ENCODE measurements at regions of chr4 and their contacts with region 1.

Region 1: DNA sequence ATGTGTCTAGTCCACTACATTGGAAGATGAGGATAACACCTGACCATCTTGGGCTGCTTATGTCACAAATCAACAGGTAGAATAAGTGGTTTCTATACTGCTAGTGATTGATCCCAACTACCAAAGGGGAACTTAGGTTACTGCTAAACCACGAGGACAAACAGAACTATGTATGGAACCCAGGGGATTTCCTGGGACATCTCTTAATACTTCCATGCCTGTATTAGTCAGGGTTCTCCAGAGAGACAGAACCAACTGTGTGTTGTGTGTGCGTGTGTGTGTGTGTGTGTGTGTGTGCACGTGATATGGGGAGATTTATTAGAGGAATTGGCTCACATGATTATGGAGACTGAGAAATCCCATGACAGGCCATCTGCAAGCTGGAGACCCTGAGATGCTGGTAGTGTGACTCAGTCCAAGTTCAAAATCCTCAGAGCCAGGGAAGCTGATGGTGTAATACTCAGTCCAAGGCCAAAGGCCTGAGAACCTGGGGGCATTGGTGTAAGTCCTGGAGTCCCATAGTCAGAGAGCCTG is 16.2 kb upstream of the AFF1 start:
- DNase-seq: no peak
- ATAC-seq: no peak
- H3K4me3 ChIP-seq: no peak overlapping the region
- H3K4me3 Mint-ChIP-seq: no peak overlapping the region
- H3K27ac ChIP-seq: no peak overlapping the region
- H3K27ac Mint-ChIP-seq: no peak overlapping the region
- H3K4me1 ChIP-seq: peaks cover 0 to 2% of the 10 kb centered on the region in 2 donors
- H3K4me1 Mint-ChIP-seq: no peaks in the 10 kb centered on the region
- H3K27me3 ChIP-seq: no peaks in the 10 kb centered on the region
- H3K27me3 Mint-ChIP-seq: no peaks in the 10 kb centered on the region
- CTCF ChIP-seq: no peak

Region 2: GRCh38 chr4:86657910-86658309 is 260.7 kb before region 1 on chr4:
- CTCF ChIA-PET with region 1: no interaction called
- POLR2A ChIA-PET with region 1: no interaction called
- intact Hi-C with region 1: no loop called
- DNase-seq: no peak
- ATAC-seq: no peak
- H3K4me3 ChIP-seq: no peak overlapping the region
- H3K4me3 Mint-ChIP-seq: no peak overlapping the region
- H3K27ac ChIP-seq: no peak overlapping the region
- H3K27ac Mint-ChIP-seq: no peak overlapping the region
- H3K4me1 ChIP-seq: no peaks in the 10 kb centered on the region
- H3K4me1 Mint-ChIP-seq: no peaks in the 10 kb centered on the region
- H3K27me3 ChIP-seq: no peaks in the 10 kb centered on the region
- H3K27me3 Mint-ChIP-seq: no peaks in the 10 kb centered on the region
- CTCF ChIP-seq: no peak

Region 3: DNA sequence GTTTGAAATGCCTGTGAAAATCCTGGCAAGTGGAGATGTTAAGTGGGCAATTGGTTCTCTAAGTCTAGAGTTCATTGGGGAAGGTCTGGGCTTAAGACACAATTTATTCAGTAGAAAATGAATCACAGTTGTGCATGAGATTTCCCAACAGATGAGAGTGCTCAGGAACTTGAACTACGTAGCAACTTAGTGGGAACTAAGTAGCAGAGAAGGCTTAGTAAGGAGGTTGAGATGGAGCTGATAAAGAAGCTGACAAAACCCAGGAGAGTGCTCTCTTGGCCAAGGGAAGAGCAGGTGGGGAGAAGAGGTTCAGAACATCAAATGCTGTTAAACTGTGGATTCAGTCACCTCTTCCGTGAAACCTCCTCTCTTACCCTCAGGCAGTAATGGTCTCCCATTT is 49.2 kb after region 1 on chr4:
- CTCF ChIA-PET with region 1: interaction called, 11 read pairs
- POLR2A ChIA-PET with region 1: interaction called, 4 read pairs
- intact Hi-C with region 1: no loop called
- DNase-seq: no peak
- ATAC-seq: no peak
- H3K4me3 ChIP-seq: no peak overlapping the region
- H3K4me3 Mint-ChIP-seq: no peak overlapping the region
- H3K27ac ChIP-seq: no peak overlapping the region
- H3K27ac Mint-ChIP-seq: no peak overlapping the region
- H3K4me1 ChIP-seq: peaks cover 40% of the 10 kb centered on the region in 2 donors
- H3K4me1 Mint-ChIP-seq: peaks cover 7% of the 10 kb centered on the region
- H3K27me3 ChIP-seq: no peaks in the 10 kb centered on the region
- H3K27me3 Mint-ChIP-seq: no peaks in the 10 kb centered on the region
- CTCF ChIP-seq: no peak

Region 4: DNA sequence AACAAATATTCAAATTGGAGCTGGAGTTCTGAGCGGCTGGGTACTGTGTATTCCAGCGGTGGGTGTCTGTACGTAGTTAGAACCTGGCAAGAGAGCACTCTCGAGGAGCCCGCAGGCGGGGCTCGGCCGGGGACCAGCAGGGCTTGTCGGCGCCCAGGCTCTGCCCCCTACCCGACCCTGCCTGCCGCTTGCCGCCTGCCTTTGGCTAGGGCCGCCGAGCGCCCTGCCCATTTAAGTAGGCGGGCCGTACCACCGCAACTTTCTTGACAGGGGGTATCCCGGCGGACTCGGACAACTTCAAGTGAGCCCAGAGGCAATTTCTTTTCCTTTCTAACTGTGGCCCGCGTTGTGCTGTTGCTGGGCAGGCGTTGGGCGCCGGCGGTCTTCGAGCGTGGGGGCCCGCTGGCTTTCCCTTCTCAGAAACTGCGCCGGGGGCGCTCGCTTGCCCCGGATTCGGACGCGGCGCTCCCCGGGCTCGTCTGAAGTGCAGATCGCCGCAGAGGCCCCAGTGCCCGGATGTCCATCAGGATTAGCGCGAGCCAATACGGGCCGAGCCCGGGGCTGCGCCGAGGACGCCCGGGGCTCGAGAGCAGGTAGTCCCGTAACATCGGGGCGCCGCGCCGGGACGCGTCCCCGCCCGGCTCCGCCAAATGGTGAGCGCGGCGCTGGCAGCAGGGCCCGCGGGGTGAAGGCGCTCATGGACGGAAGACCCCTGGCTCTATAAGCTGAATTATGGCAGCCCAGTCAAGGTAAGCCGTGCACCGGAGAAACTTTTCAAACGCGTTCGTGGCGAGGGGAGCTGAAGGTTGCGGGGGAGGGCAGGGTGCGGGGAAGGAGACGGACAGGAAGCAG is 88.3 kb after region 1 on chr4:
- CTCF ChIA-PET with region 1: interaction called, 93 read pairs
- POLR2A ChIA-PET with region 1: interaction called, 8 read pairs
- intact Hi-C with region 1: loop called (anchors 1 kb)
- DNase-seq: peak; percentile 97
- ATAC-seq: peak; percentile 85
- H3K4me3 ChIP-seq: peak overlapping the region; percentile 67 to 100 (median 89)
- H3K4me3 Mint-ChIP-seq: peak overlapping the region; percentile 99
- H3K27ac ChIP-seq: peak overlapping the region; percentile 88 to 92
- H3K27ac Mint-ChIP-seq: peak overlapping the region; percentile 95
- H3K4me1 ChIP-seq: peaks cover 40 to 46% of the 10 kb centered on the region in 2 donors
- H3K4me1 Mint-ChIP-seq: peaks cover 54% of the 10 kb centered on the region
- H3K27me3 ChIP-seq: no peaks in the 10 kb centered on the region
- H3K27me3 Mint-ChIP-seq: no peaks in the 10 kb centered on the region
- CTCF ChIP-seq: peak; percentile 8

Region 5: DNA sequence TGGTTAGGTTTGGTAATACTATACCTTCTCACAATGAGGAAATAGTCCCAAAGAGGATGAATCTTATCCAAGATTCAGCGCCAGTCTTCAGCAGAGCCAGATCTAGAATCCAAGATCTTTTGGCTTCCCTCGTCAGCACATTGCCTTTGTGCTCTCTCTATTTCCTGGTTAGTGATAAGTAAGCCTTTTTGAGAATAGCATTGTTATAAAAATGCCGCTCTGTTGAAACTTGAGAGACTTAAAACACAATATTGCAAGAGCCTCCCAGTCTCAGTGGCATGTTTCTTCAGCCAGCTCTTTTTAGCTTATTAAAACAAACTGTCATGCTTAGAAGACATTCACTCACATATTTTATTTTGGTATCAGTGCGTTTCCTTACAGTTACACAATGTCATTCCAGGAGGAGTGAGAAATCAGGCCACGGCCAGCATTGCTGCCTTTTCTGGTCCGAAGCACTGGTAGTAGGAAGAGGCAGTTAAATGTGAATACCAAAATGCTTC is 160.4 kb after region 1 on chr4:
- CTCF ChIA-PET with region 1: interaction called, 35 read pairs
- POLR2A ChIA-PET with region 1: no interaction called
- intact Hi-C with region 1: no loop called
- DNase-seq: no peak
- ATAC-seq: no peak
- H3K4me3 ChIP-seq: no peak overlapping the region
- H3K4me3 Mint-ChIP-seq: no peak overlapping the region
- H3K27ac ChIP-seq: no peak overlapping the region
- H3K27ac Mint-ChIP-seq: no peak overlapping the region
- H3K4me1 ChIP-seq: peaks cover 3 to 17% of the 10 kb centered on the region in 2 donors
- H3K4me1 Mint-ChIP-seq: peaks cover 35% of the 10 kb centered on the region
- H3K27me3 ChIP-seq: no peaks in the 10 kb centered on the region
- H3K27me3 Mint-ChIP-seq: no peaks in the 10 kb centered on the region
- CTCF ChIP-seq: no peak

Region 6: GRCh38 chr4:87108142-87108546 is 189.5 kb after region 1 on chr4:
- CTCF ChIA-PET with region 1: interaction called, 124 read pairs
- POLR2A ChIA-PET with region 1: no interaction called
- intact Hi-C with region 1: no loop called
- DNase-seq: no peak
- ATAC-seq: no peak
- H3K4me3 ChIP-seq: no peak overlapping the region
- H3K4me3 Mint-ChIP-seq: no peak overlapping the region
- H3K27ac ChIP-seq: no peak overlapping the region
- H3K27ac Mint-ChIP-seq: no peak overlapping the region
- H3K4me1 ChIP-seq: no peaks in the 10 kb centered on the region
- H3K4me1 Mint-ChIP-seq: peaks cover 4% of the 10 kb centered on the region
- H3K27me3 ChIP-seq: no peaks in the 10 kb centered on the region
- H3K27me3 Mint-ChIP-seq: no peaks in the 10 kb centered on the region
- CTCF ChIP-seq: no peak

Region 7: GRCh38 chr4:87134122-87134521 is 215.5 kb after region 1 on chr4:
- CTCF ChIA-PET with region 1: interaction called, 20 read pairs
- POLR2A ChIA-PET with region 1: no interaction called
- intact Hi-C with region 1: no loop called
- DNase-seq: no peak
- ATAC-seq: no peak
- H3K4me3 ChIP-seq: no peak overlapping the region
- H3K4me3 Mint-ChIP-seq: no peak overlapping the region
- H3K27ac ChIP-seq: no peak overlapping the region
- H3K27ac Mint-ChIP-seq: no peak overlapping the region
- H3K4me1 ChIP-seq: peaks cover 0 to 2% of the 10 kb centered on the region in 2 donors
- H3K4me1 Mint-ChIP-seq: peaks cover 3% of the 10 kb centered on the region
- H3K27me3 ChIP-seq: no peaks in the 10 kb centered on the region
- H3K27me3 Mint-ChIP-seq: no peaks in the 10 kb centered on the region
- CTCF ChIP-seq: no peak

Region 8: DNA sequence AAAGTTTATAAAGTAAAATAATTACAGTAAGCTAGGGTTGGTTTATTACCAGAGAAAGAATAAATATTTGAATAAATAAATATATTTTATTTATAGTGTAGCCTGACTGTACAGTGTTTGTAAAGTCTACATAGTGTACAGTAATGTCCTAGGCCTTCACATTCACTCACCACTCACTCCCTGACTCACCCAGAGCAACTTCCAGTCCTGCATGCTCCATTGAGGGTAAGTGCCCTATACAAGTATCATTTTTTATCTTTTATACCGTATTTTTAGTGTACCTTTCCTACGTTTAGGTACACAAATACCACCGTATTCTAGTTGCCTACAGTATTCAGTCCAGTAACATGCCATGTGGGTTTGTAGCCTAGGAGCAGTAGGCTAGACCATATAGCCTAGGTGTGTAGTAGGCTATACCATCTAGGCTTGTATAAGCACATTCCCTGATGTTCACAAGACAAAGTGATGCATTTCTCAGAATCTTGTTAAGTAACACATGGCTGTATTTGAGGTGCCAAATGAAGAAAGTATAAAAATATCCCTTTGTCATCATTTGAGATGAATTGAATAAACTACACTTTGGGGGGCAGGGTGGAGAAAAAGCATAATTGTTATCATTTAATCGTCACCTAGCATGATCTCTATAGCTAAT is 316.5 kb after region 1 on chr4:
- CTCF ChIA-PET with region 1: interaction called, 12 read pairs
- POLR2A ChIA-PET with region 1: no interaction called
- intact Hi-C with region 1: loop called (anchors 1 kb)
- DNase-seq: peak; percentile 12
- ATAC-seq: no peak
- H3K4me3 ChIP-seq: peak overlapping the region in 4 of 5 experiments; percentile 35 to 66 (median 44)
- H3K4me3 Mint-ChIP-seq: peak overlapping the region; percentile 74
- H3K27ac ChIP-seq: no peak overlapping the region
- H3K27ac Mint-ChIP-seq: no peak overlapping the region
- H3K4me1 ChIP-seq: peaks cover 0 to 6% of the 10 kb centered on the region in 2 donors
- H3K4me1 Mint-ChIP-seq: peaks cover 4% of the 10 kb centered on the region
- H3K27me3 ChIP-seq: no peaks in the 10 kb centered on the region
- H3K27me3 Mint-ChIP-seq: peaks cover 5% of the 10 kb centered on the region
- CTCF ChIP-seq: no peak

Measured in B cell (primary cell).